ENCODE measurements at regions of chr9 and their contacts with region 1.

Region 1: DNA sequence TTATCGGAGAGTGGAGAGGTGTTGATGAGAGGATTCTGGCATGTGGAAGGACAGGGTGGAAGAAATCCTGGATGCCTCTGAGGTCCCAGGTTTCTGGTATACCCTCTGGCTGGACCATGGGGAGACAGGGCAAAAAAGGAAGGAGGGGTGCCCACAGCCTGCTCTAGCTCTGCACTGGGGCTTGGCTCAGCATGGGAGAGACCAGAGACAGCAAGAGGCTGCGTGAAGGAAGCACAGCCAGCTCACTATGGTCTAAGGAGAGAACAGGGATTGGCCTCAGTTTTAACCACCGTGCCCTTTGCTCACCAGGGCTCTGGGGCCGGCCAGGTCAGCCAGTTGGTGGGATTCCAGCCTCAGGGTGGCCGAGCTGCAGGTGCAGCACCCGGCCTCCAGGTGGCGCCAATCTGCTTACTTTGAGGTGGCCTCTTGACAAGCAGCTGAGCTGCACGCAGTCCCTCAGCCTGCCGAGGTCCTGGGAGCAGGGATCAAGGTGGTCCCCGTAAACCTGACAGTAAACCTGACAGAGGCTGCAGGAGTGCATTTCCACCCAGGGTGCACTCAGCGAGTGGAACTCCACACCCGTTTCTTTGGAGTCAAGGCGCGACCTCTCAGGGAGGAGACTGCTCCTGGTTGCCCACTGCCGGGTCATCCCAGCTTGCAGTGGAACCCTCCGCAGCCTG is 25.0 kb upstream of the SPTLC1 start:
- DNase-seq: peak; percentile 72 to 73
- ATAC-seq: peak; percentile 41 to 81; a peak in 5 of 6 replicates
- H3K4me3 ChIP-seq: no peak overlapping the region
- H3K27ac ChIP-seq: peak overlapping the region; percentile 12 to 73; a peak in 3 of 6 replicates
- H3K4me1 ChIP-seq: peaks cover 5% of the 10 kb centered on the region; the same call in 2 of the 3 replicates
- CTCF ChIP-seq: peak; percentile 88
- EP300 ChIP-seq: no peak
- POLR2A ChIP-seq: no peak
- RAD21 ChIP-seq: peak; percentile 83 to 89

Region 2: GRCh38 chr9:92165484-92165883 is 25.3 kb after region 1 on chr9:
- CTCF ChIA-PET with region 1: interaction called, 18 read pairs
- POLR2A ChIA-PET with region 1: no interaction called
- DNase-seq: no peak
- ATAC-seq: no peak
- H3K4me3 ChIP-seq: no peak overlapping the region
- H3K27ac ChIP-seq: no peak overlapping the region
- H3K4me1 ChIP-seq: no peaks in the 10 kb centered on the region
- CTCF ChIP-seq: no peak
- EP300 ChIP-seq: no peak
- POLR2A ChIP-seq: no peak
- RAD21 ChIP-seq: no peak

Region 3: GRCh38 chr9:92191801-92192200 is 51.6 kb after region 1 on chr9:
- CTCF ChIA-PET with region 1: interaction called, 10 read pairs
- POLR2A ChIA-PET with region 1: no interaction called
- DNase-seq: no peak
- ATAC-seq: no peak; a peak in 2 of 6 replicates
- H3K4me3 ChIP-seq: no peak overlapping the region
- H3K27ac ChIP-seq: no peak overlapping the region
- H3K4me1 ChIP-seq: no peaks in the 10 kb centered on the region
- CTCF ChIP-seq: no peak
- EP300 ChIP-seq: no peak
- POLR2A ChIP-seq: no peak
- RAD21 ChIP-seq: no peak

Region 4: GRCh38 chr9:92234514-92234913 is 94.3 kb after region 1 on chr9:
- CTCF ChIA-PET with region 1: interaction called, 214 read pairs
- POLR2A ChIA-PET with region 1: no interaction called
- DNase-seq: no peak
- ATAC-seq: peak; percentile 31 to 54; a peak in 4 of 6 replicates
- H3K4me3 ChIP-seq: no peak overlapping the region
- H3K27ac ChIP-seq: no peak overlapping the region
- H3K4me1 ChIP-seq: no peaks in the 10 kb centered on the region
- CTCF ChIP-seq: no peak
- EP300 ChIP-seq: no peak
- POLR2A ChIP-seq: no peak
- RAD21 ChIP-seq: no peak

Region 5: DNA sequence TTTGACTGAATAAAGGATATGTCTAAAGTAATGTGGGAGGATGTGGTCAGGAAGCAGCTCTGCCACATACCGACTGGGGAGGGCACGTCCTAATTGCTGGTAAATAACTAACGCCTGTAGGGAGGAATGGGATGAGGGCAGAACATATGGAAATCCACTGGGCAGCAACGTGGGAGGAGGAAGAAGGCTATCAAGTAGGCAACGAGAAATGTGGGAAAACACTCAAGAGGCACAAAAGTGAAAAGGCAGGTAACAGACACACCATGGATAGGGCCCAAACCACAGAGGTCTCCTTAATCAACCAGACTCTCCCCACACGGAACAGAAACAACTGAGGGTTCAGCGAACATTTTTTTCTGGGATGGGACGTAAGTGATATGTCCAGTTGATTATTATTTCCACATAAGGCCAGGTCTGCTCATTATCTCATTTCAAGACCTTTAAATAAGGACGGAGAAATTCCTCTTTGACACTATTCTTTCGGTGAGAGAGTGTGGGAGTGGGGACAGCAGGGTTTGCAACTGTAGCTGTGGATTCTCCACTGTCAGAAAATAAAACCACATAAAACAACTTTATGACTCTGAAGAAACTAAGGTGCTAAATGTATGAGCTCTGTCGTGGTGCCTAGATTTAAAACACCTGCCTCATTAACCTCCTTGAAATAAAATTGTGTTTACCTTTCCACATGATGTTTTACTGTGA is 136.3 kb after region 1 on chr9:
- CTCF ChIA-PET with region 1: interaction called, 31 read pairs
- POLR2A ChIA-PET with region 1: no interaction called
- DNase-seq: no peak
- ATAC-seq: no peak
- H3K4me3 ChIP-seq: no peak overlapping the region
- H3K27ac ChIP-seq: no peak overlapping the region
- H3K4me1 ChIP-seq: no peaks in the 10 kb centered on the region
- CTCF ChIP-seq: no peak
- EP300 ChIP-seq: no peak
- POLR2A ChIP-seq: no peak
- RAD21 ChIP-seq: no peak

Region 6: GRCh38 chr9:92325269-92325990 is 185.2 kb after region 1 on chr9 and contains the starts of genes CENPP and NOL8:
- CTCF ChIA-PET with region 1: interaction called, 21 read pairs
- POLR2A ChIA-PET with region 1: no interaction called
- DNase-seq: peak; percentile 89 to 91
- ATAC-seq: peak; percentile 96
- H3K4me3 ChIP-seq: peak within 1 kb of the TSS; percentile 60
- H3K27ac ChIP-seq: peak within 1 kb of the TSS; percentile 98 to 99
- H3K4me1 ChIP-seq: peaks cover 17% of the 10 kb centered on the region
- CTCF ChIP-seq: no peak
- EP300 ChIP-seq: no peak
- POLR2A ChIP-seq: peak; percentile 81
- RAD21 ChIP-seq: no peak
- polyA plus RNA-seq, gene CENPP: 13.4 and 15.5 TPM in 2 replicates
- polyA plus RNA-seq, gene NOL8: 30.2 and 47.2 TPM in 2 replicates